ENCODE measurements at regions of chr7 and their contacts with region 1.

Region 1: DNA sequence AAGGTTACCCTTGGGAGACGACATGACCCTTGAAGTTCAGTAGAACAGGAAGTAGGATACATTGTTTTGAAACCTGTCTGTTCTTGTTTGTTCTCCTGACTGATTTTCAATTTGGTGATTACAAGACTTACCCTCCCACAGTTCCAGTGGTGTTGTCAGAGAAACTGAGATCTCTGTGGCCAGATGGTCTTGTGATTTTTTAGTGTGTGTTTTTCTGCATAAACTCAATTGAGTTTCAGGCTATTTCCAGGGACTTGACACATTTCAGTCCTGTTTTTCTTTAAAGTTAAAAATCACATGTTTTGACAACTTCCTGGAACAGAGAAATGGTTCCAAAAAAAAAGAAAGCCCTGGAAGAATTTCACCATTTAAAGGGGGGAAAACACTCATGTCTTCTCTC is 22.3 kb downstream of the PIK3CG start:
- DNase-seq: no peak
- H3K4me3 ChIP-seq: no peak overlapping the region
- H3K4me3 Mint-ChIP-seq: no peak overlapping the region
- H3K27ac ChIP-seq: peak overlapping the region in 1 of 2 donors; percentile 9
- H3K27ac Mint-ChIP-seq: peak overlapping the region in 5 of 7 donors; percentile 1 to 79 (median 47)
- H3K4me1 ChIP-seq: no peaks in the 10 kb centered on the region
- H3K4me1 Mint-ChIP-seq: peaks cover 6% of the 10 kb centered on the region
- H3K27me3 ChIP-seq: no peaks in the 10 kb centered on the region
- H3K27me3 Mint-ChIP-seq: no peaks in the 10 kb centered on the region
- CTCF ChIP-seq: no peak

Region 2: DNA sequence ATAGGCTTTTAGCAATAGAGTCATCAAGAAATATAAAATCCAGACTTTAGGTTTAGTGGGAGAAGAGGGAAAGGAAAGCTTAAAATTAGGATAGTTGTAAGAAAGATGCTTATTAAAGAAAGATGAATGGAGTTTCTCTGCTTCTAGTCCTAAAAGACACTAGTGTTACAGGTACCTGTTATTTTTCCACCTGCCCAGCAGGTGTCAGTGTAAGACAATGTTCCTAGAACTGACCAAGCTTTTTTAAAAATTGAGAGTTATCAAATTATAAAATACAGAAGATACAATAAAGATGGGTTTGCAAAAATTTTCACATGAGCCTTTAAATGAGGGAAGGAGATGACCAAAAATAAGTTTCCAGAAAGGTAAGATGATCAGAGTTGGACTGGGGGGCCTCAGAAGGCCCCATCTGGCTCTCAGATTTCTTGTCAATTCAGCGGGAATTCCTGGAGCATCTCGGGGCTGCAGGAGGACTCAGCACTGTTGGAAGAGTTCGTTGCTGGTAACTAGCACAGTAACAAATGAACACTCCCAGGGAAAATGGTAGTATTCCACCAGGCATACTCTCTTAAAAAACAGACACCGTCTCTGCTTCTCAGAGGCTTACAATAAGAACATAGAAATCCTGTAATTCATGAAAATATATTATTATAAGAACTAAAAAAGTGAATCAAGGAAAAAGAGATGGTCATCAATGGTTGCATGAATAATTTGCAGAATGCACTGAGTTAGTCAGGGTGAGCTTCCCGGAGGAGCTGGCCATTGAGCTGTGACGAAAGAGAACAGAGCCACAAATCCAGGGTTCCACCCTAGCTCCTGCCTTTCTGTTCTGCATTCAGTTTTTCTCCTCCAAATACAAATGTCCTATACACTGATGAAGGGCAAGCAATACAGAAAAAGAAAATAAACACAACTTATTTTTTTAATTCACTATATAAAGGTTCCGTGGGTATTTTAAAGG is 94.1 kb before region 1 on chr7:
- intact Hi-C with region 1: loop called in 1 of 2 experiments (anchors 10 kb)
- DNase-seq: peak in 2 of 3 donors; percentile 21 to 52
- H3K4me3 ChIP-seq: no peak overlapping the region
- H3K4me3 Mint-ChIP-seq: no peak overlapping the region
- H3K27ac ChIP-seq: no peak overlapping the region
- H3K27ac Mint-ChIP-seq: no peak overlapping the region
- H3K4me1 ChIP-seq: no peaks in the 10 kb centered on the region
- H3K4me1 Mint-ChIP-seq: no peaks in the 10 kb centered on the region
- H3K27me3 ChIP-seq: no peaks in the 10 kb centered on the region
- H3K27me3 Mint-ChIP-seq: peaks cover 1 to 5% (median 4%) of the 10 kb centered on the region in 3 donors
- CTCF ChIP-seq: peak; percentile 88